ENCODE measurements at regions of chr3 and their contacts with region 1.

Region 1: GRCh38 chr3:20375302-20375701 is 189.3 kb upstream of the SGO1 start:
- DNase-seq: no peak
- H3K4me3 Mint-ChIP-seq: no peak overlapping the region
- H3K27ac Mint-ChIP-seq: no peak overlapping the region
- H3K4me1 Mint-ChIP-seq: no peaks in the 10 kb centered on the region
- H3K27me3 Mint-ChIP-seq: no peaks in the 10 kb centered on the region
- CTCF ChIP-seq: no peak

Region 2: GRCh38 chr3:20405744-20406143 is 30.4 kb after region 1 on chr3:
- CTCF ChIA-PET with region 1: no interaction called
- intact Hi-C with region 1: loop called (anchors 1 kb)
- DNase-seq: no peak
- H3K4me3 Mint-ChIP-seq: no peak overlapping the region
- H3K27ac Mint-ChIP-seq: no peak overlapping the region
- H3K4me1 Mint-ChIP-seq: no peaks in the 10 kb centered on the region
- H3K27me3 Mint-ChIP-seq: no peaks in the 10 kb centered on the region
- CTCF ChIP-seq: no peak

Measured in Calu3 (cell line).